CD8-positive, alpha-beta T cell (primary cell): ENCODE measurements at regions of chr18 and their contacts with region 1.

Region 1: GRCh38 chr18:27073404-27073830 is 111.7 kb downstream of the CHST9 start:
- DNase-seq: no peak
- ATAC-seq: no peak
- H3K4me3 ChIP-seq: no peak overlapping the region
- H3K4me3 Mint-ChIP-seq: no peak overlapping the region
- H3K27ac ChIP-seq: no peak overlapping the region
- H3K27ac Mint-ChIP-seq: no peak overlapping the region
- H3K4me1 ChIP-seq: no peaks in the 10 kb centered on the region
- H3K4me1 Mint-ChIP-seq: no peaks in the 10 kb centered on the region
- H3K27me3 ChIP-seq: no peaks in the 10 kb centered on the region
- H3K27me3 Mint-ChIP-seq: no peaks in the 10 kb centered on the region
- CTCF ChIP-seq: no peak

Region 2: GRCh38 chr18:26164571-26164970 is 908.8 kb before region 1 on chr18:
- CTCF ChIA-PET with region 1: no interaction called
- POLR2A ChIA-PET with region 1: no interaction called
- intact Hi-C with region 1: loop called in 1 of 2 experiments (anchors 10 kb)
- DNase-seq: no peak
- ATAC-seq: no peak
- H3K4me3 ChIP-seq: no peak overlapping the region
- H3K4me3 Mint-ChIP-seq: no peak overlapping the region
- H3K27ac ChIP-seq: no peak overlapping the region
- H3K27ac Mint-ChIP-seq: no peak overlapping the region
- H3K4me1 ChIP-seq: no peaks in the 10 kb centered on the region
- H3K4me1 Mint-ChIP-seq: peaks cover 4% of the 10 kb centered on the region
- H3K27me3 ChIP-seq: no peaks in the 10 kb centered on the region
- H3K27me3 Mint-ChIP-seq: no peaks in the 10 kb centered on the region
- CTCF ChIP-seq: no peak

Region 3: GRCh38 chr18:26804519-26804918 is 268.9 kb before region 1 on chr18:
- CTCF ChIA-PET with region 1: no interaction called
- POLR2A ChIA-PET with region 1: no interaction called
- intact Hi-C with region 1: no loop called
- DNase-seq: no peak
- ATAC-seq: no peak
- H3K4me3 ChIP-seq: no peak overlapping the region
- H3K4me3 Mint-ChIP-seq: no peak overlapping the region
- H3K27ac ChIP-seq: no peak overlapping the region
- H3K27ac Mint-ChIP-seq: no peak overlapping the region
- H3K4me1 ChIP-seq: no peaks in the 10 kb centered on the region
- H3K4me1 Mint-ChIP-seq: no peaks in the 10 kb centered on the region
- H3K27me3 ChIP-seq: no peaks in the 10 kb centered on the region
- H3K27me3 Mint-ChIP-seq: no peaks in the 10 kb centered on the region
- CTCF ChIP-seq: no peak

Region 4: GRCh38 chr18:27164905-27165304 is 91.5 kb after region 1 on chr18:
- CTCF ChIA-PET with region 1: no interaction called
- POLR2A ChIA-PET with region 1: no interaction called
- intact Hi-C with region 1: no loop called
- DNase-seq: no peak
- ATAC-seq: no peak
- H3K4me3 ChIP-seq: no peak overlapping the region
- H3K4me3 Mint-ChIP-seq: no peak overlapping the region
- H3K27ac ChIP-seq: no peak overlapping the region
- H3K27ac Mint-ChIP-seq: no peak overlapping the region
- H3K4me1 ChIP-seq: no peaks in the 10 kb centered on the region
- H3K4me1 Mint-ChIP-seq: no peaks in the 10 kb centered on the region
- H3K27me3 ChIP-seq: no peaks in the 10 kb centered on the region
- H3K27me3 Mint-ChIP-seq: no peaks in the 10 kb centered on the region
- CTCF ChIP-seq: no peak